CD14-positive monocyte (primary cell): ENCODE measurements at regions of chr11 and their contacts with region 1.

Region 1: GRCh38 chr11:75445315-75445953 is 12.4 kb upstream of the KLHL35 start:
- DNase-seq: peak; percentile 36 to 57 (median 56)
- H3K4me3 ChIP-seq: no peak overlapping the region
- H3K4me3 Mint-ChIP-seq: no peak overlapping the region
- H3K27ac ChIP-seq: no peak overlapping the region
- H3K27ac Mint-ChIP-seq: no peak overlapping the region
- H3K4me1 ChIP-seq: no peaks in the 10 kb centered on the region
- H3K4me1 Mint-ChIP-seq: no peaks in the 10 kb centered on the region
- H3K27me3 ChIP-seq: no peaks in the 10 kb centered on the region
- H3K27me3 Mint-ChIP-seq: peaks cover 0 to 4% (median 0%) of the 10 kb centered on the region in 3 donors
- CTCF ChIP-seq: peak; percentile 98

Region 2: GRCh38 chr11:75399344-75400145 is 45.9 kb before region 1 on chr11 and contains the start of gene RPS3:
- intact Hi-C with region 1: no loop called
- DNase-seq: peak; percentile 87 to 91 (median 90)
- H3K4me3 ChIP-seq: peak within 1 kb of the TSS; percentile 91 to 96 (median 92)
- H3K4me3 Mint-ChIP-seq: peak within 1 kb of the TSS; percentile 98 to 99
- H3K27ac ChIP-seq: peak within 1 kb of the TSS; percentile 90 to 95
- H3K27ac Mint-ChIP-seq: peak within 1 kb of the TSS; percentile 95 to 99 (median 98)
- H3K4me1 ChIP-seq: peaks cover 15 to 28% of the 10 kb centered on the region in 2 donors
- H3K4me1 Mint-ChIP-seq: peaks cover 38% of the 10 kb centered on the region
- H3K27me3 ChIP-seq: no peaks in the 10 kb centered on the region
- H3K27me3 Mint-ChIP-seq: peaks cover 1 to 7% (median 6%) of the 10 kb centered on the region in 3 donors
- CTCF ChIP-seq: no peak
- polyA plus RNA-seq, gene RPS3: 1,248 to 1,563 (median 1,448) TPM

Region 3: DNA sequence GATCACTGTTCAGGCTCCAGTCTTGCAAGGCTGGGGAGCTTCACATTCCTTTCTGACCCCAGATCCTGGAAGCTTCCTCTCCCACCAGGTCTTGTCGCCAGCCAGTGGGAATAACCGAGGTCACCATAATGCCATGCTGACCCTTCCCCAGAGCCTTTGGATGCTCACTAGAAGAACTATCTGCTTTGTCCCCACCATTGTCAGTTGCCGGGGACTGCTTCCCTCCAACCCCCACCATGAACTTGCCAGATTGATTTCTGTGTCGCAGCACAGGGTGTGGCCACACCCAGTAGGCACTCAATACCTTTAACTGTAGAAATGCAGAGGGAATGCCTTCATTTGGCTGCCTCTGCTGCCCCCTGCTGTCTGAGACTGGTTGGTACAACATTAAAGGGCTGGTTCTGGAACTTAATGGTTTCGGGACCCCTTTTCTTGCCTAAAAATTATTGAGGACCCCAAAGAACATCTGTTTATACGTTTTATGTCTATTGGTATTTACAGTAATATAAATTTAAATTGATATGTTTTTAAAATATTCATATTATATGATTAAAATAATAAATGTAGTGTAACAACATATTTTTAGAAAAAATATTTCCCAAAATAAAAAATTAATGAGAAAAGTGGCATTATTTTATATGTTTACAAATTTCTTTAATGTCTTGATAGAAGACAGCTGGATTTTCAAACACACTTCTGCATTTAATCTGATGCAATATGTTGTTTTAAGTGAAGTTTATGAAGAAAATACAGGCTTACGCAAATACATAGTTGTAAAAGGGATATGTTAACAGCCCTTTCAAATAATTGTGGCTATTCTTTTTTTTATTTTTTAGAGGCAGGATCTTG is 87.0 kb after region 1 on chr11:
- intact Hi-C with region 1: loop called (anchors 1 kb)
- DNase-seq: peak; percentile 62 to 73 (median 68)
- H3K4me3 ChIP-seq: no peak overlapping the region
- H3K4me3 Mint-ChIP-seq: no peak overlapping the region
- H3K27ac ChIP-seq: no peak overlapping the region
- H3K27ac Mint-ChIP-seq: no peak overlapping the region
- H3K4me1 ChIP-seq: peaks cover 14 to 15% of the 10 kb centered on the region in 2 donors
- H3K4me1 Mint-ChIP-seq: peaks cover 25% of the 10 kb centered on the region
- H3K27me3 ChIP-seq: no peaks in the 10 kb centered on the region
- H3K27me3 Mint-ChIP-seq: peaks cover 6 to 18% (median 7%) of the 10 kb centered on the region in 3 donors
- CTCF ChIP-seq: peak; percentile 97

Region 4: GRCh38 chr11:75654314-75654713 is 208.9 kb after region 1 on chr11:
- intact Hi-C with region 1: no loop called
- DNase-seq: no peak
- H3K4me3 ChIP-seq: no peak overlapping the region
- H3K4me3 Mint-ChIP-seq: no peak overlapping the region
- H3K27ac ChIP-seq: no peak overlapping the region
- H3K27ac Mint-ChIP-seq: no peak overlapping the region
- H3K4me1 ChIP-seq: no peaks in the 10 kb centered on the region
- H3K4me1 Mint-ChIP-seq: no peaks in the 10 kb centered on the region
- H3K27me3 ChIP-seq: peaks cover 2% of the 10 kb centered on the region in 2 donors
- H3K27me3 Mint-ChIP-seq: peaks cover 15 to 20% (median 19%) of the 10 kb centered on the region in 3 donors
- CTCF ChIP-seq: no peak